Naive thymus-derived CD8-positive, alpha-beta T cell (primary cell): ENCODE measurements at regions of chr2 and their contacts with region 1.

Region 1: DNA sequence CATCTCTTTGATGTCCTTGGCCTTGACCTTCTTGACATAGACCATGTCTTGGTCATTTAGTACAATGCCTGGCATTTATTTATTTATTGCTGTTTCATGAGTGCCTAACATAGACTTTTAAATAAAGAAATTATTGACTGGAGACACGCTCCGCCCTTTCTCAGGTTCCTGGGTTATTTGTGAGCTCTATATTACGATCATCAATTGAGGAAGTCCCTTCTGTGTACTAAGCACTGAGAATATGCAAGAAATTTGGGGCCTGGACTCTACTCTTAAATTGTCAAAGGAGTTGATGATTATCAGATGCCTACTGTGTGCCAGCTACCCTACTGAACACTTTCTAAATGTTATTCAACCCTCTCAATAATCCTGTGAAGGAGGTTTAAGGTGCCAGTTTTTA is 19.7 kb upstream of the TET3 start:
- DNase-seq: no peak
- ATAC-seq: no peak
- H3K4me3 Mint-ChIP-seq: no peak overlapping the region
- H3K27ac Mint-ChIP-seq: peak overlapping the region in 2 of 10 donors; percentile 0 to 33
- H3K4me1 Mint-ChIP-seq: peaks cover 35 to 50% (median 46%) of the 10 kb centered on the region in 4 donors
- H3K27me3 Mint-ChIP-seq: no peaks in the 10 kb centered on the region

Region 2: DNA sequence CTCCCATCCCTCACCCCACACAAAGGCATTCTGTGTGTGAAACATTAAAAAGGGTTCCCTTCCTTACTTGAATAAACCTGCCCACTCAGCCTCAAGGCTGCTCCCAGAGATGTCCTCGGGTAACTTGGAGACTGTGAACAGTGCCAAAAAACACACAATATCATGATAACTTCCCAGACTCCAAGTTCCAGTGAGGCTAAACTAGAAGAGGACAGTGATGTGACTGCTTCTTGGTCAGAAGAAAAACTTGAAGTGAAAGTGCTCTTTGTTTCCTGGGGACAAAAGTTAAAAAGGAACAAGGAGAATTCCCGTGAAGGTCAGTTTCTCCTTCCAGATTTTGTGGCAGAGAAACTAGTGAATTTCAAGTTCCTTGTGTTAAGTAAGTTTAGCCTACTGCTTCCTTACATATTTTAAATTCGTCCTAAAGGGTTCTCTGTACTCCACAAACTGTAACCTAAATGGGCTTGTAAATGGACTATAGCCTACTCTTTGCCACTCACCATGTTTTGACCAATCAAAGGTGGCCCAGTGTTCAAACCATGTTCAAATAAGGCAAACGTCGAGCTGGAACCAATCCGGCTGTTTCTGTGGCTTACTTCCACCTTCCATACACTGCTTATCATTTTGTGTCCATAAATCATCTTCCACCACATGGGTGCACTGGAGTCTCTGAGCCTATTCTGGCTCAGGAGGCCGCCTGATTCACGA is 248.4 kb before region 1 on chr2:
- POLR2A ChIA-PET with region 1: no interaction called
- DNase-seq: no peak
- ATAC-seq: no peak
- H3K4me3 Mint-ChIP-seq: peak overlapping the region in 1 of 10 donors; percentile 11
- H3K27ac Mint-ChIP-seq: no peak overlapping the region
- H3K4me1 Mint-ChIP-seq: peaks cover 0 to 2% (median 0%) of the 10 kb centered on the region in 4 donors
- H3K27me3 Mint-ChIP-seq: peaks cover 0 to 12% (median 8%) of the 10 kb centered on the region in 5 donors

Region 3: DNA sequence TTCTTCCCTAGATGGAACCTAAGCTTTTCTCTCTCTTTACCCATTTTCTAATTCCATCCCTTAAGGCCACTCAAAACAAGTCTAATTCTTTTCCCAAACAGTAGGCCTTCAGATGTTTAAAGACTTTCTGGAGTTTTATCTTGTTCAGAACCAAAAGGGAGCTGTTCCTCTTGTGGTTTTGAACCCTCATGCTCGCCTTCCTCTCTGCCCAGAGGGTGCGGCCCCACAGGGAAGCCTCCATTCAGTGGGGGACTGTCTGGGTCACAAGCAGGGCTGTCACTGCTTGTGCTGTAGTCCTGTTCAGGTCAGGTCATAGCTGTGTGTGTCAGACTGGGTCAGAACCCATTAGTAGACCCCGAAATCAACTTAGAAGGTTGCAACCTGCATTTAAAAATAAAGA is 76.1 kb after region 1 on chr2:
- POLR2A ChIA-PET with region 1: interaction called, 10 read pairs
- DNase-seq: no peak
- ATAC-seq: no peak
- H3K4me3 Mint-ChIP-seq: peak overlapping the region in 7 of 10 donors; percentile 5 to 63 (median 32)
- H3K27ac Mint-ChIP-seq: peak overlapping the region; percentile 31 to 85 (median 76)
- H3K4me1 Mint-ChIP-seq: peaks cover 60 to 91% (median 86%) of the 10 kb centered on the region in 4 donors
- H3K27me3 Mint-ChIP-seq: no peaks in the 10 kb centered on the region